Activated CD8-positive, alpha-beta T cell treated with anti-CD3 and anti-CD28 coated beads, Interleukin-2, amount 10 ng/mL, durations not matched to agents 7 days and 5 days (primary cell): ENCODE measurements at regions of chr11 and their contacts with region 1.

Region 1: GRCh38 chr11:10792398-10792975 is 16.2 kb downstream of the EIF4G2 start:
- DNase-seq: peak; percentile 88
- ATAC-seq: peak; percentile 87
- H3K4me3 Mint-ChIP-seq: no peak overlapping the region
- H3K27ac Mint-ChIP-seq: no peak overlapping the region
- H3K4me1 Mint-ChIP-seq: peaks cover 36% of the 10 kb centered on the region
- H3K27me3 Mint-ChIP-seq: peaks cover 16% of the 10 kb centered on the region

Region 2: DNA sequence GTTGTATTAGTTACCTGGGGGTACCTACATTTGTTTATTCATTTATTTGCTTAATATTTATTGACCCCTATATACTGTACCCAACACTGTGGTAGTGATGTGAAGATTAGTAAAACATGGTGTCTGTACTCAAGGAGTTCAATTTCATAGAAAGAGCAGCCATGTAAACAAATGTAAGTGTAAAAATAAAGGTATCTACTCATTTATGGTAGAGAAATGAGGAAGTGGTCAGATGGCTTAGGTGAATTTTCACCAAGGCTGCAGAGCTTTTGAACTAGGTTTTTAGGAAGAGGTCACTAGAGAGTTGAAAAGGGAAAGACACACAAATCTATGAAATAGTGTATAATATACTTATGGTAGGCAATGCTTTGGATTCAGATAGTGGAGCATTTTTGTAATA is 30.3 kb before region 1 on chr11:
- CTCF ChIA-PET with region 1: interaction called, 17 read pairs
- POLR2A ChIA-PET with region 1: no interaction called
- DNase-seq: no peak
- ATAC-seq: no peak
- H3K4me3 Mint-ChIP-seq: no peak overlapping the region
- H3K27ac Mint-ChIP-seq: peak overlapping the region; percentile 9
- H3K4me1 Mint-ChIP-seq: peaks cover 12% of the 10 kb centered on the region
- H3K27me3 Mint-ChIP-seq: no peaks in the 10 kb centered on the region

Region 3: DNA sequence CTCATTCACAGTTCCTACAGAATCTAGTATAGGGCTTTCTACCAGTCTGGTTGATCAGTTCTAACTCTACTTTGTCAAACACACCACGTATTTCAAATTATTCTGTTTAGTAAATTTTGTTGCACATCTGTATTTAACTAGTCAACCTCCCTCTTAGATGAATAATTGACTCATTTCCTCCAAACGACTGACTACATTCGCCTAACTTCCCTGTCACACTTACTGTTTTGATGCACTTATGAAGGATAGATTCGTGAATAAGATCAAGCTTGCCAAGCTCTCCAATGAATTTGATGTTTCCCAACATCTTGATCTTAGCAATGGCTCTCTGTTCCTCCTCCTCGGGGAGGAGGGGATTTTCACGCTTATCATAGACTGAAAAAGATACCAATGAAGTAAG is 11.2 kb after region 1 on chr11:
- CTCF ChIA-PET with region 1: interaction called, 50 read pairs
- POLR2A ChIA-PET with region 1: interaction called, 56 read pairs
- DNase-seq: no peak
- ATAC-seq: no peak
- H3K4me3 Mint-ChIP-seq: no peak overlapping the region
- H3K27ac Mint-ChIP-seq: no peak overlapping the region
- H3K4me1 Mint-ChIP-seq: peaks cover 78% of the 10 kb centered on the region
- H3K27me3 Mint-ChIP-seq: no peaks in the 10 kb centered on the region

Region 4: GRCh38 chr11:10847960-10848870 is 55.7 kb after region 1 on chr11:
- CTCF ChIA-PET with region 1: interaction called, 11 read pairs
- POLR2A ChIA-PET with region 1: no interaction called
- DNase-seq: no peak
- ATAC-seq: no peak
- H3K4me3 Mint-ChIP-seq: no peak overlapping the region
- H3K27ac Mint-ChIP-seq: no peak overlapping the region
- H3K4me1 Mint-ChIP-seq: peaks cover 14% of the 10 kb centered on the region
- H3K27me3 Mint-ChIP-seq: no peaks in the 10 kb centered on the region

Region 5: GRCh38 chr11:10906513-10906912 is 114.0 kb after region 1 on chr11:
- CTCF ChIA-PET with region 1: interaction called, 21 read pairs
- POLR2A ChIA-PET with region 1: no interaction called
- DNase-seq: no peak
- ATAC-seq: no peak
- H3K4me3 Mint-ChIP-seq: no peak overlapping the region
- H3K27ac Mint-ChIP-seq: no peak overlapping the region
- H3K4me1 Mint-ChIP-seq: no peaks in the 10 kb centered on the region
- H3K27me3 Mint-ChIP-seq: peaks cover 21% of the 10 kb centered on the region

Region 6: DNA sequence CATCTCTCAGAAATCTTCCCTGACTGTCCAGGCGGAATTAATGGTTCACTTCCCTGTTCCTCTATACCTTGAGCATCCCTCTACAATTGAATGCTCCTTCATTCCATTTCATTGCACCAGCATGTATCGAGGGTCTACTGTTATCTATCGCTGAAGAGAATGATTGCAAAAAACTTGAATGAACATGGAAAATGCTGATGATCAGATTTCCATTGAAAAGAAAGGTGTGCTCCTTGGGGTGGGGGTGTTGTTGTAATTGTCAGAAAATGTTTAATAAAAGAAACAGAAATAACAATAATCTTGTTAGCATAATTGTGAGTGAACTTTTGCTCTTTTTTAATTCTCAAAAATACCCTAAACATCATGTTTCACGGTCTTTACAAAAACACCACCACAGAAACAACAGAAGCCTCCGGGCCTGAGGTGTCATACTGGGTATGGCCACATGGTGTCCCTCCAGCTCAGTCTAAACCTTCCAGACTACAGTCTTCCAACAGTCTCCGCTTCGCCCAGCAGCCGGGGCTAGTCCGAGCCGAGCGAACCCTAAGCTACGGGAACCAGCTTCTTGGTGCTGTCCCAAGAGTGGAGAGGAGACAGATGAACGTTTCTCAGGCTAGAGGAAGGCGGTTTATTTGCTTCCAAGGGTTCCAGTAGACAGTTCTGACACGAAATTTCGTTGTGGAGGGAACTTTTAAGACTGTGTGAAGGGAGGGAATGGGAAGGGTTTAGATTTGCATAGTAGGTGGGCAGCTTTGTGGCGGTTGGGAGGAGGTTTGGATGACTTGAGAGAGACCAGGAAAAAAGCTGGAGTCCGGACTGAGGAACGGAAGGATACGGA is 141.2 kb after region 1 on chr11:
- CTCF ChIA-PET with region 1: interaction called, 29 read pairs
- POLR2A ChIA-PET with region 1: no interaction called
- DNase-seq: peak; percentile 85
- ATAC-seq: peak; percentile 79
- H3K4me3 Mint-ChIP-seq: peak overlapping the region; percentile 70
- H3K27ac Mint-ChIP-seq: no peak overlapping the region
- H3K4me1 Mint-ChIP-seq: peaks cover 18% of the 10 kb centered on the region
- H3K27me3 Mint-ChIP-seq: peaks cover 43% of the 10 kb centered on the region

Region 7: DNA sequence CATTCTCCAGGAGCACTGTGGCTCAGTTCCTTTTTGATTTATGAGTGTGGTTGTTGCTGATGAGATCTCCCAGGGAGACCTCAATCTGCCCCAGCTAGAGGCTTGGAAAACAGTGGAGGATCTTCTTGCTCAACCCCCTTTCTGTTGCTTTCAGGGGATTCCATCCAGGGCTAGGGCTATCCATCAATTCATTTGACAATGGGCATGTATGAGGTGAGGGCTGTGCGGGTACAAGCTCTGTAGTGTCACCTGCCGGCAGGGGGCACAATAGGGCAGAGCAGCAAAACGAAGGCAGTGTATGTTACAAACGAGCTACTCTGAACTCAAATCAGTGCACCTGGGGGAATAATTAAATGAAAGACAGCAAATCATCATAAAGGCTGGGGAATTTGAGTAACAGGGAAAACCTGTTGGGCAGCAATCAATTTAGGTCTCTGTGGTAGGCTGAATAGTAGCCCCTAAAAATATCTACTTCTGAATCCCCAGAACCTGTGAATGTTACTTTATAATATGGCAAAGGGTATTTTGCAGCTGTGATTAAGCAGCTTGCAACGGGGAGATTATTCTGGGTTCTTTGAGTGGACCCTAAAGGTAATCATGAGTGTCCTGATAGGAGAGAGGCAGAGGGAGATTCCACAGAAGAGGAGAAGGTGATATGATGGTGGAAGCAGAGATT is 235.7 kb after region 1 on chr11:
- CTCF ChIA-PET with region 1: interaction called, 41 read pairs
- POLR2A ChIA-PET with region 1: interaction called, 4 read pairs
- DNase-seq: peak; percentile 84
- ATAC-seq: peak; percentile 91
- H3K4me3 Mint-ChIP-seq: no peak overlapping the region
- H3K27ac Mint-ChIP-seq: no peak overlapping the region
- H3K4me1 Mint-ChIP-seq: no peaks in the 10 kb centered on the region
- H3K27me3 Mint-ChIP-seq: peaks cover 19% of the 10 kb centered on the region